CD4-positive, alpha-beta T cell (primary cell): ENCODE measurements at regions of chr16 and their contacts with region 1.

Region 1: DNA sequence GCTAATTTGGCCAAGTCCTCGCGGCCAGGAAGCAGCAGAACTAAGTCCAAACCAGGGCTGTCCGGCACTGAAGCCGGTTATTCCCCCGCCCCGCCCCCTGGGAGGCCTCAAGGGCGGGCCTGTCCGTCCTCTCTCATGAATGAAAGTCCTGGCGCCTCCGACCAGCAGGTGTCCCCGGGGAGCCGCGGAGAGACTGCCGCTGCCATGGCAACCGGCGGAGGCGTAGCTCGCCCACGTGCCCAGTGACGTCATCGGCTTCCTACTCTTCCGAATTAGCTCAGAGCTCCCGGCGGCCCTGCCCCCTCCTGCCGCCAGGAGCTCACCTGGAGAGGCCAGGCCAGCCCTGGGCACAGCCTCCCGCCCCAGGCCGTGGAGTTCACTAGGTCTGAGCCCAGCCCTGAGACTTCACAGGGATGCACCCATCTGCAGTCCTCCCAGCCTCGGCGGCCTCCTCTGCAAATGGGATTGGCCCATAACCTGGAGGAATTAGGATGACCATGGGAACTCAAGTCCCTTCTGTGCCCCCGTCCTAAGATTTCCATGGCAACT is 1.3 kb downstream of the SPATA2L start:
- DNase-seq: peak; percentile 87 to 99 (median 94)
- ATAC-seq: peak; percentile 13
- H3K4me3 ChIP-seq: peak overlapping the region; percentile 63
- H3K4me3 Mint-ChIP-seq: peak overlapping the region; percentile 83
- H3K27ac ChIP-seq: peak overlapping the region; percentile 77 to 92
- H3K27ac Mint-ChIP-seq: peak overlapping the region; percentile 81
- H3K4me1 ChIP-seq: peaks cover 44% of the 10 kb centered on the region
- H3K4me1 Mint-ChIP-seq: peaks cover 16% of the 10 kb centered on the region
- H3K27me3 ChIP-seq: no peaks in the 10 kb centered on the region
- H3K27me3 Mint-ChIP-seq: no peaks in the 10 kb centered on the region
- CTCF ChIP-seq: peak; percentile 80

Region 2: GRCh38 chr16:89646906-89647305 is 53.3 kb before region 1 on chr16:
- CTCF ChIA-PET with region 1: no interaction called
- POLR2A ChIA-PET with region 1: no interaction called
- intact Hi-C with region 1: no loop called
- DNase-seq: peak in 1 of 14 experiments; percentile 23
- ATAC-seq: no peak
- H3K4me3 ChIP-seq: no peak overlapping the region
- H3K4me3 Mint-ChIP-seq: no peak overlapping the region
- H3K27ac ChIP-seq: no peak overlapping the region
- H3K27ac Mint-ChIP-seq: no peak overlapping the region
- H3K4me1 ChIP-seq: no peaks in the 10 kb centered on the region
- H3K4me1 Mint-ChIP-seq: no peaks in the 10 kb centered on the region
- H3K27me3 ChIP-seq: no peaks in the 10 kb centered on the region
- H3K27me3 Mint-ChIP-seq: no peaks in the 10 kb centered on the region
- CTCF ChIP-seq: no peak

Region 3: GRCh38 chr16:89720813-89721545 is 20.8 kb after region 1 on chr16 and contains the starts of genes VPS9D1 and ZNF276:
- CTCF ChIA-PET with region 1: interaction called, 37 read pairs
- POLR2A ChIA-PET with region 1: interaction called, 28 read pairs
- intact Hi-C with region 1: loop called (anchors 1 kb)
- DNase-seq: peak; percentile 73 to 93 (median 85)
- ATAC-seq: peak; percentile 43
- H3K4me3 ChIP-seq: peak within 1 kb of the TSS; percentile 87
- H3K4me3 Mint-ChIP-seq: peak within 1 kb of the TSS; percentile 99
- H3K27ac ChIP-seq: peak within 1 kb of the TSS; percentile 69 to 94
- H3K27ac Mint-ChIP-seq: peak within 1 kb of the TSS; percentile 98
- H3K4me1 ChIP-seq: peaks cover 57% of the 10 kb centered on the region
- H3K4me1 Mint-ChIP-seq: peaks cover 32% of the 10 kb centered on the region
- H3K27me3 ChIP-seq: no peaks in the 10 kb centered on the region
- H3K27me3 Mint-ChIP-seq: no peaks in the 10 kb centered on the region
- CTCF ChIP-seq: no peak
- total RNA-seq, gene VPS9D1: 18.5 to 21.8 TPM
- total RNA-seq, gene ZNF276: 127 to 137 TPM

Region 4: DNA sequence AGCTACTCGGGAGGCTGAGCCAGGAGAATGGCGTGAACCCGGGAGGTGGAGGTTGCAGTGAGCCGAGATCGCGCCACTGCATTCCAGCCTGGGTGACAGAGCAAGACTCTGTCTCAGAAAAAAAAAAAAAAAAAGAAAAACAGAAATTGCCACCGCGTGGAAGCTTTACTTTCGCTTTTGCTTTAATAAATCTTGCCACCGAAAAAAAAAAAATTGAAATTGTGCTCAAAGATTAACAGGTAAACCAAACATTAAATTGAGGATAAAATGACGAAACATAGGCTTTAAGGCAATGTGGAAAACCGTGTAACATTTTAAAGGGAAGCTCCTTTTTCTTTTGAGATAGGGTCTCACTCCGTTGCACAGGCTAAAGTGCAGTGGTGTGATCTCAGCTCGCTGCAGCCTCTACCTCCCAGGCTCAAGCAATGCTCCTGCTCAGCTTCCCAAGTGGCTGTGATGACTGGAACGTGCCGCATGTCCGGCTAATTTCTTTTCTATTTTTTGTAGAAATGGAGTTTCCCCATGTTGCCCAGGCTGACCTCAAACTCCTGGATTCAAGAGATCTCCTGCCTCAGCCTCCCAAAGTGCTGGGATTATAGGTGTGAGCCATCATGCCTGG is 61.2 kb after region 1 on chr16:
- CTCF ChIA-PET with region 1: interaction called, 13 read pairs
- POLR2A ChIA-PET with region 1: interaction called, 5 read pairs
- intact Hi-C with region 1: no loop called
- DNase-seq: peak in 4 of 14 experiments; percentile 41 to 66 (median 49)
- ATAC-seq: peak; percentile 68
- H3K4me3 ChIP-seq: peak overlapping the region; percentile 48
- H3K4me3 Mint-ChIP-seq: peak overlapping the region; percentile 87
- H3K27ac ChIP-seq: peak overlapping the region in 1 of 2 donors; percentile 24
- H3K27ac Mint-ChIP-seq: peak overlapping the region; percentile 88
- H3K4me1 ChIP-seq: peaks cover 65% of the 10 kb centered on the region
- H3K4me1 Mint-ChIP-seq: peaks cover 29% of the 10 kb centered on the region
- H3K27me3 ChIP-seq: no peaks in the 10 kb centered on the region
- H3K27me3 Mint-ChIP-seq: no peaks in the 10 kb centered on the region
- CTCF ChIP-seq: no peak

Region 5: GRCh38 chr16:89791278-89791995 is 91.3 kb after region 1 on chr16:
- CTCF ChIA-PET with region 1: interaction called, 44 read pairs
- POLR2A ChIA-PET with region 1: no interaction called
- intact Hi-C with region 1: no loop called
- DNase-seq: no peak
- ATAC-seq: no peak
- H3K4me3 ChIP-seq: no peak overlapping the region
- H3K4me3 Mint-ChIP-seq: no peak overlapping the region
- H3K27ac ChIP-seq: no peak overlapping the region
- H3K27ac Mint-ChIP-seq: no peak overlapping the region
- H3K4me1 ChIP-seq: peaks cover 14% of the 10 kb centered on the region
- H3K4me1 Mint-ChIP-seq: peaks cover 15% of the 10 kb centered on the region
- H3K27me3 ChIP-seq: no peaks in the 10 kb centered on the region
- H3K27me3 Mint-ChIP-seq: no peaks in the 10 kb centered on the region
- CTCF ChIP-seq: no peak

Region 6: GRCh38 chr16:89873972-89874689 is 174.0 kb after region 1 on chr16:
- CTCF ChIA-PET with region 1: interaction called, 13 read pairs
- POLR2A ChIA-PET with region 1: interaction called, 35 read pairs
- intact Hi-C with region 1: loop called (anchors 1 kb)
- DNase-seq: peak; percentile 88 to 98 (median 95)
- ATAC-seq: peak; percentile 78
- H3K4me3 ChIP-seq: peak overlapping the region; percentile 98
- H3K4me3 Mint-ChIP-seq: peak overlapping the region; percentile 87
- H3K27ac ChIP-seq: peak overlapping the region; percentile 99 to 100
- H3K27ac Mint-ChIP-seq: peak overlapping the region; percentile 79
- H3K4me1 ChIP-seq: peaks cover 23% of the 10 kb centered on the region
- H3K4me1 Mint-ChIP-seq: peaks cover 14% of the 10 kb centered on the region
- H3K27me3 ChIP-seq: no peaks in the 10 kb centered on the region
- H3K27me3 Mint-ChIP-seq: no peaks in the 10 kb centered on the region
- CTCF ChIP-seq: no peak

Region 7: GRCh38 chr16:90022209-90023064 is 322.3 kb after region 1 on chr16:
- CTCF ChIA-PET with region 1: no interaction called
- POLR2A ChIA-PET with region 1: no interaction called
- intact Hi-C with region 1: loop called in 1 of 2 experiments (anchors 5 kb)
- DNase-seq: peak; percentile 53 to 88 (median 71)
- ATAC-seq: peak; percentile 66
- H3K4me3 ChIP-seq: peak overlapping the region; percentile 57
- H3K4me3 Mint-ChIP-seq: peak overlapping the region; percentile 55
- H3K27ac ChIP-seq: no peak overlapping the region
- H3K27ac Mint-ChIP-seq: peak overlapping the region; percentile 30
- H3K4me1 ChIP-seq: peaks cover 54% of the 10 kb centered on the region
- H3K4me1 Mint-ChIP-seq: peaks cover 20% of the 10 kb centered on the region
- H3K27me3 ChIP-seq: peaks cover 0 to 5% of the 10 kb centered on the region in 2 experiments
- H3K27me3 Mint-ChIP-seq: no peaks in the 10 kb centered on the region
- CTCF ChIP-seq: no peak